Mucosa of descending colon (tissue), 3 donors: ENCODE measurements at regions of chr16 and their contacts with region 1.

Region 1: GRCh38 chr16:23182460-23183309 is at the start of gene SCNN1G:
- DNase-seq: peak; percentile 89 to 97 (median 93)
- ATAC-seq: peak; percentile 99
- H3K4me3 ChIP-seq: peak within 1 kb of the TSS; percentile 17
- H3K4me1 ChIP-seq: peaks cover 13% of the 10 kb centered on the region
- CTCF ChIP-seq: peak; percentile 98
- total RNA-seq, gene SCNN1G: 1.9 to 52.4 (median 4.2) TPM

Region 2: DNA sequence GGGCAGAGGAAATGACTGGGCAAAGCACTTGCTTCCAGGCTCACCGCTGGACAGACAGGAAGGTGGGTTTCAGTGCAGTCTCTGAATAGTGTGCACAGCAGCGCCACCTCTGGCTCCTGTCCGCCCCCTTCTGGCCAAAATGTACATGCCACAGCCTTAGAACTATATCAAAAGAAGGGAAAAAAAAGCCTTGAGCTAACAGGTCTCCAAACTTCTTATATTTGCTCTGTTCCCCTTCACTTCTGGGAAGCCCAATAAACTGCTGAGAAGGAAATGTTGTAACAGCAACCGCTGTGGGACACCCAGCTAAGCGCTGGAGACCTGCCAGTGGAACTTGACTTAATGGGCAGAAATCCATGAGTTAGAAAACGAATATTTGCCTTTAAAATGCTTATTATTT is 252.8 kb after region 1 on chr16:
- intact Hi-C with region 1: loop called (anchors 1 to 2 kb)
- DNase-seq: peak in 2 of 3 donors; percentile 66 to 81
- ATAC-seq: peak; percentile 61
- H3K4me3 ChIP-seq: no peak overlapping the region
- H3K4me1 ChIP-seq: peaks cover 3% of the 10 kb centered on the region
- CTCF ChIP-seq: peak; percentile 75